ENCODE measurements at regions of chr7 and their contacts with region 1.

Region 1: DNA sequence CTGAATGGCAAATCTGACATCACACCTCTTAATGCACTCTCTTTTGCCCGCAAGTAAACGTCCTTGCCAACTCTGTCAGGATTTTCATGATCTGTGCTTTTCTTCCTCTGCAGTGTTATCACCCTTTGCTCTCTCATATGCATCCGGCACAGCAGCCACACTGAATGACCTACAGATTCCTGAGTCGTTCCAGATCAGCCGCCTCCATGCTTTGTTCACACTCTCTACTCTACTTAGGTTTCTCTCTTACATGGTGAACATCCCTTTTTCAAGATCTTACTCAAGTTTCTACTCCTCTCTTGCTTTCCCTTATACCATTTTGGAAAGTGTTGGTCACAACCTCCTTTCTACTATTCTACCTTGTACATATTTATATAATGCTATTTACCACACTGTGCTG is 127.7 kb upstream of the AOAH start:
- DNase-seq: no peak
- H3K4me3 Mint-ChIP-seq: peak overlapping the region; percentile 4
- H3K27ac Mint-ChIP-seq: peak overlapping the region; percentile 83
- H3K4me1 Mint-ChIP-seq: peaks cover 21% of the 10 kb centered on the region
- H3K27me3 Mint-ChIP-seq: no peaks in the 10 kb centered on the region

Region 2: GRCh38 chr7:36600869-36601530 is 251.0 kb before region 1 on chr7:
- intact Hi-C with region 1: loop called (anchors 5 kb)
- DNase-seq: peak; percentile 14
- H3K4me3 Mint-ChIP-seq: no peak overlapping the region
- H3K27ac Mint-ChIP-seq: peak overlapping the region; percentile 54
- H3K4me1 Mint-ChIP-seq: peaks cover 70% of the 10 kb centered on the region
- H3K27me3 Mint-ChIP-seq: no peaks in the 10 kb centered on the region

Region 3: DNA sequence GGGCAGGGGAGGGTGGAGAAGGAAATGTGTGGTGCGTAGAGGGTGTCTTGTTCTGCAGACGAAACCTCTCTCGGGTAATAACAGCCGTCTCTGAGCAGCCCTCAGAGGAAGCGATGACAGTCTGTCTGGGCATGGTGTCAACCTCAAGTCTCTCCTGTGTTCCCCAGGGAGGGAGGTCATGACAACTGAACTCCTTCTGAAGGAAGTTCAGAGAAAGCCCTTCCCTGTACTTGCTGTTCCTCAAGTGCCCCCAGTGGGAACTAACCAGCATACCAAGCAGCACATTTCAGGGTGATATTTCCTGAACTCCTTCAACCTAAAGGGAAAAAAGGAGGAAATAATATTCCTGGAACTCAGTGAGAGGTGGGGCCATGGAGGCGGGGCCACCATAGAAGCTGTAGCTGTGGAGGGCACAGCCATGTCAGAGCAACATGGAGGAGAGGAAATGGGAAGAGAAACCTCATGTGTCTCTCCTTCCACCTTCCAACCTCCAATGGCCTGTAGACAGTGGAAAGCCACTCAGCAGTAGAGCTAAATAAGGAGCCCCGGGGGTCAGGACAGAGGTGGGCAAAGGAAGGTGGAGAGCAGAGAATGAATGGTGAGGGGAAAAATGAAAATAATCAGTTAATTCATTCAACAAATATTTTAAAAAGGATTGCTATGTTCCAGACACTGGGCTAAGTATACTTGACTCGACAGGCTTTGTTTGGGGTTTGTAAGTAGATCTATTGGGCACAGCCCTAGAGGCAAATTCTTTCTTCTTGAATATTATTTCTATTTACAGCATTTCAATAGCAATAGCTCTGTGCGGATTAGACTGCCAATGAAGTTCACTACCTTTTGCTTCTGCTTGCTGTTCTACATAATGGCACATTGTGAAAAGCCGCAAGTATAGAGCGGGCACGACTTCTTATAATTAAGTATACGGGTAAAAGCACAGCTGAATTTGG is 66.8 kb before region 1 on chr7:
- intact Hi-C with region 1: loop called (anchors 1 kb)
- DNase-seq: peak; percentile 68
- H3K4me3 Mint-ChIP-seq: peak overlapping the region; percentile 72
- H3K27ac Mint-ChIP-seq: peak overlapping the region; percentile 92
- H3K4me1 Mint-ChIP-seq: peaks cover 74% of the 10 kb centered on the region
- H3K27me3 Mint-ChIP-seq: no peaks in the 10 kb centered on the region

Region 4: DNA sequence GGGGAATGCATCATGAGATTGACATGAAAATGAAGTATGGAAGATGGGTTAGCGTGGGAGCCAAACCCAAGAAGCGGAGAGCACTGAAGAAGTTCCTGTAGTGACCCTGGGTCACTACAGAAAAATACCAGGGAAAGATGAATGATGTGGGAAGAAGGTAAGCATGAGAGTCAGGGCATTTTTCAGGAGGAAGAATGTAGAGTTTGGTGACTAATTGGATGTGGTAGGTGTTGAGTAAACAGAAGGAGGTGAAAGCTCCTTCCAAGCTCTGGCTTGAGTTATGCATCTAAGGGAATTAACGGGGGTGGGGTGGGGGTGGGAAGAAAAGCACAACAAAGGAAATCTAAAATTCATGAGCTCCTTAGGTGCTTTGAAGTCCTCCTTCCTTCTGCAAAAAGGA is 110.3 kb after region 1 on chr7:
- intact Hi-C with region 1: loop called (anchors 1 kb)
- DNase-seq: no peak
- H3K4me3 Mint-ChIP-seq: no peak overlapping the region
- H3K27ac Mint-ChIP-seq: peak overlapping the region; percentile 55
- H3K4me1 Mint-ChIP-seq: peaks cover 44% of the 10 kb centered on the region
- H3K27me3 Mint-ChIP-seq: no peaks in the 10 kb centered on the region

Region 5: DNA sequence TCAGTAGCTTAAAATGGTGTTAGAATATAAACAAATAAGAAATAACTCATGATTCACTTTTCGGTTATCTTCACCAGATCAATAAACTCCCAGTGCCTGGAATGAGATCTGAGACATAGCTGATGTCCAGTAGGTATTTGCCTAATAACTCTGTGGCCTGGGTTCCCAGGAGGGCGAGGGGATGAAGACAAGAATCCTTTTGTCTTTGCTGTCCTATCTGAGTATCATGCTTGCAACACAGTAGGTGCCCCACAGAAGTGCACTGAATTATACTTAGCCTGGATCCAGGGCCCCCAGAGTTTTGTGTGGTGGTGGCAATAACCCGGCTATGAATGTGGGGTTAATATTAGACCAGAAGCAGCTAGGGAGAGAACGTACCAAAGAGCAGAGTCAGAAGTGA is 222.4 kb after region 1 on chr7:
- intact Hi-C with region 1: loop called (anchors 1 kb)
- DNase-seq: no peak
- H3K4me3 Mint-ChIP-seq: no peak overlapping the region
- H3K27ac Mint-ChIP-seq: no peak overlapping the region
- H3K4me1 Mint-ChIP-seq: peaks cover 46% of the 10 kb centered on the region
- H3K27me3 Mint-ChIP-seq: no peaks in the 10 kb centered on the region

Measured in activated T-helper 1 cell treated with anti-CD3 and anti-CD28 coated beads, Interleukin-12 subunit alpha, Interleukin-12 subunit beta, Interleukin-2, Interleukin-4 antibody, amounts not matched to agents 30 ng/mL and 10 ng/mL and 1 ng/mL, durations not matched to agents 14 hours and 24 hours and 36 hours (primary cell).